K562 (cell line): ENCODE measurements at regions of chr3 and their contacts with region 1.

Region 1: DNA sequence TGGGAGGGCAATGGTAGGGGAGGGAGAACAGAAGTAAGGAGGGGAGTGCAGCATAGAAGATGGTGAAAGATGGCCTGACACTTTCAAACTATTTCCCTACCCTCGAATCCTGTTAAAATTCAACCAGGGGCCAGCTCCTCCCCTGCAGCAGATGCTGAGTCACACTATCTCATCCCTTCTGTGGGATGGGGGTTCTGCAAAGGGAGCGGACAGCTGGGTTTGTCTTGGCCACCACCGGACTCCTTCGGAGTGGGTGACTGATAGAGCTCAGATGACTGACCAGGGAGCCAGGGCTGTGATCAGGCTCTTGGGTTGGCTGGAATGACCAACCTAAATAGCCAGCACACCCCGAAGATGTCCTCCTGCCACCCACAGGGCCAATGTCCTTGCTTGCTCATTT is 33.6 kb upstream of the TMCC1 start:
- DNase-seq: peak; percentile 28 to 57 (median 46)
- ATAC-seq: peak; percentile 84
- H3K4me3 ChIP-seq: no peak overlapping the region
- H3K27ac ChIP-seq: no peak overlapping the region
- H3K4me1 ChIP-seq: peaks cover 4 to 7% of the 10 kb centered on the region in 2 experiments; a peak in 3 of 5 replicates
- H3K27me3 ChIP-seq: no peaks in the 10 kb centered on the region
- CTCF ChIP-seq: no peak
- EP300 ChIP-seq: no peak
- POLR2A ChIP-seq: no peak
- RAD21 ChIP-seq: no peak

Region 2: GRCh38 chr3:129058441-129059200 is 868.5 kb before region 1 on chr3:
- CTCF ChIA-PET with region 1: no interaction called
- POLR2A ChIA-PET with region 1: no interaction called
- in situ Hi-C with region 1: no loop called
- intact Hi-C with region 1: no loop called
- DNase-seq: no peak
- ATAC-seq: no peak
- H3K4me3 ChIP-seq: no peak overlapping the region
- H3K27ac ChIP-seq: no peak overlapping the region
- H3K4me1 ChIP-seq: peaks cover 28 to 42% of the 10 kb centered on the region in 2 experiments; a peak in 4 of 5 replicates
- H3K27me3 ChIP-seq: no peaks in the 10 kb centered on the region
- CTCF ChIP-seq: no peak
- EP300 ChIP-seq: no peak
- POLR2A ChIP-seq: no peak
- RAD21 ChIP-seq: no peak

Region 3: GRCh38 chr3:129855454-129856419 is 71.3 kb before region 1 on chr3:
- CTCF ChIA-PET with region 1: no interaction called
- POLR2A ChIA-PET with region 1: no interaction called
- in situ Hi-C with region 1: no loop called
- intact Hi-C with region 1: loop called (anchors 2 kb)
- DNase-seq: peak in 1 of 4 experiments; percentile 17
- ATAC-seq: peak; percentile 22; the same call in 2 of the 3 replicates
- H3K4me3 ChIP-seq: no peak overlapping the region
- H3K27ac ChIP-seq: peak overlapping the region; percentile 77
- H3K4me1 ChIP-seq: peaks cover 0 to 24% of the 10 kb centered on the region in 2 experiments; a peak in 3 of 5 replicates
- H3K27me3 ChIP-seq: no peaks in the 10 kb centered on the region
- CTCF ChIP-seq: no peak
- EP300 ChIP-seq: no peak
- POLR2A ChIP-seq: no peak
- RAD21 ChIP-seq: no peak

Region 4: GRCh38 chr3:130010556-130010955 is 83.5 kb after region 1 on chr3:
- CTCF ChIA-PET with region 1: no interaction called
- POLR2A ChIA-PET with region 1: no interaction called
- in situ Hi-C with region 1: no loop called
- intact Hi-C with region 1: no loop called
- DNase-seq: no peak
- ATAC-seq: no peak
- H3K4me3 ChIP-seq: no peak overlapping the region
- H3K27ac ChIP-seq: no peak overlapping the region
- H3K4me1 ChIP-seq: no peaks in the 10 kb centered on the region; a peak in 1 of 5 replicates
- H3K27me3 ChIP-seq: peaks cover 0 to 12% of the 10 kb centered on the region in 2 experiments; a peak in 2 of 5 replicates
- CTCF ChIP-seq: no peak
- EP300 ChIP-seq: no peak
- POLR2A ChIP-seq: no peak
- RAD21 ChIP-seq: no peak

Region 5: DNA sequence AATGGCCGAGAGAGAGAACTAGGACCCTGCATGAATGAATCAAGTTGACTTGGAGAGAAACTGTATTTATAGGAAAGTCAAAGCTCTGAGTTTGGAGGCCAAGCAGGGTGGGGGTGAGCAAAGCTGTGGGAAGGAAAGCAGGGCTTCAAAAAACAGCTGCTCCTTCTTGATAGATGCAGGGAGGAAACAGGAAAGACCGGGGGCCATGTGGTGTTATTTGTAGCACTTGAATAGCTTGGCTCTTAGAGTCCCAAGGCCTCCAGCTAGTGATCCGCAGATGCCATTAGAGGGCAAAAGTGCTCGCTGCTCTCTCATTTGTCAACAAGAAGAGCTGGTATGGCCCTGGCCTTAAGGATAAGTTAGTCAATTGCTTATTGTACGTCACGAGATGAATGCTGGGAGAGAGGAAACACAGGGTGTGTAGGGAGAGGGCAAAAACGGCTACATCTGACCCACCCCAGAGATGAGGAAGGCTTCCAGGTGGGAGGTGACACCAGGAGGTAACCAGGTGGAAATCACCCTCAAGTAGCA is 154.3 kb after region 1 on chr3 and contains the start of gene ALG1L2:
- CTCF ChIA-PET with region 1: no interaction called
- POLR2A ChIA-PET with region 1: no interaction called
- in situ Hi-C with region 1: no loop called
- intact Hi-C with region 1: no loop called
- DNase-seq: no peak
- ATAC-seq: no peak
- H3K4me3 ChIP-seq: no peak within 1 kb of the TSS
- H3K27ac ChIP-seq: no peak within 1 kb of the TSS
- H3K4me1 ChIP-seq: no peaks in the 10 kb centered on the region; a peak in 2 of 5 replicates
- H3K27me3 ChIP-seq: peaks cover 0 to 10% of the 10 kb centered on the region in 2 experiments; a peak in 2 of 5 replicates
- CTCF ChIP-seq: no peak
- EP300 ChIP-seq: no peak
- POLR2A ChIP-seq: no peak
- RAD21 ChIP-seq: no peak
- polyA plus RNA-seq, gene ALG1L2: 0.10 TPM in 1 of 2 experiments, not detected in the other